ENCODE measurements at regions of chr5 and their contacts with region 1.

Region 1: GRCh38 chr5:149636851-149637246 is 55.6 kb downstream of the ARHGEF37 start:
- DNase-seq: peak; percentile 58 to 84
- H3K4me3 ChIP-seq: no peak overlapping the region
- H3K27ac ChIP-seq: no peak overlapping the region
- H3K4me1 ChIP-seq: peaks cover 0 to 8% (median 3%) of the 10 kb centered on the region in 4 donors
- H3K27me3 ChIP-seq: no peaks in the 10 kb centered on the region
- CTCF ChIP-seq: peak; percentile 83 to 90

Region 2: DNA sequence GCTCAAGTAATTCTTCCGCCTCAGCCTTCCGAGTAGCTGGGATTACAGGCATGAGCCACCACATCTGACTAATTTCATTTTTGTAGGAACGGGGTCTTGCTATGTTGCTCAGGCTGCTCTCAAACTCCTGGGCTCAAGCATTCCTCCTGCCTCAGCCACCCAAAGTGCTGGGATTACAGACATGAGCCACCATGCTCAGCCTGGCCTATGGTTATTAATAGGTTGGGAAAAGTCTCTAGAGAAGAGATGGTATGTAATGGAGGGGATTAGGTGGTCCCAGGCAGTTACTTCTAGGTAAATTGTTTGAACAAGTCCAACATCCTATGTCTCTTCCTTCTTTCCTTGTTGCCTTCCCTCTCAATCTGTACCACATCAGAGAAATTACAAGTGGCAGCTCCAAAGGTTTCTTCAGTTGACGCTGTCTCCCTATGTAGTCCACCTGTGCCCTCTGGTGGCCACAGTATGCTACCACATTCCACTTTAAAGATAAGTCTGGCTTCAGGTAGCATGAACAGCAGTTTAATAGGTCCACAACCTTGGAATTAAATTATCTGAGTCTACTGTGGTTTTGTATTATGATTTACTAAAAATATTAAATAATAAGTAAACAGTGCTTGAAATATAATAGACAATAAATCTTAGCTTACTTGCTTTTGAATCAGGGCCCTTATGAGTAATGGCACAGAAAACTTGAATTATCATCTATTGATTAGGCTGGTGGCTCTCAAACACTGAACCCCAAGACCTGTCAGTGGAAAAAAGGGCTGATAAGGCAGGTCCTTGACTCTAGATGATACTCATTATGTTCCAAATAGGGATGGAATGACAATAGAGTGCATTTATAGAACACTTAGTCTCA is 353.9 kb after region 1 on chr5:
- intact Hi-C with region 1: loop called (anchors 10 kb)
- DNase-seq: peak; percentile 80 to 82
- H3K4me3 ChIP-seq: no peak overlapping the region
- H3K27ac ChIP-seq: no peak overlapping the region
- H3K4me1 ChIP-seq: peaks cover 0 to 24% (median 0%) of the 10 kb centered on the region in 4 donors
- H3K27me3 ChIP-seq: no peaks in the 10 kb centered on the region
- CTCF ChIP-seq: peak; percentile 92 to 94